ENCODE measurements at regions of chr18 and their contacts with region 1.

Region 1: DNA sequence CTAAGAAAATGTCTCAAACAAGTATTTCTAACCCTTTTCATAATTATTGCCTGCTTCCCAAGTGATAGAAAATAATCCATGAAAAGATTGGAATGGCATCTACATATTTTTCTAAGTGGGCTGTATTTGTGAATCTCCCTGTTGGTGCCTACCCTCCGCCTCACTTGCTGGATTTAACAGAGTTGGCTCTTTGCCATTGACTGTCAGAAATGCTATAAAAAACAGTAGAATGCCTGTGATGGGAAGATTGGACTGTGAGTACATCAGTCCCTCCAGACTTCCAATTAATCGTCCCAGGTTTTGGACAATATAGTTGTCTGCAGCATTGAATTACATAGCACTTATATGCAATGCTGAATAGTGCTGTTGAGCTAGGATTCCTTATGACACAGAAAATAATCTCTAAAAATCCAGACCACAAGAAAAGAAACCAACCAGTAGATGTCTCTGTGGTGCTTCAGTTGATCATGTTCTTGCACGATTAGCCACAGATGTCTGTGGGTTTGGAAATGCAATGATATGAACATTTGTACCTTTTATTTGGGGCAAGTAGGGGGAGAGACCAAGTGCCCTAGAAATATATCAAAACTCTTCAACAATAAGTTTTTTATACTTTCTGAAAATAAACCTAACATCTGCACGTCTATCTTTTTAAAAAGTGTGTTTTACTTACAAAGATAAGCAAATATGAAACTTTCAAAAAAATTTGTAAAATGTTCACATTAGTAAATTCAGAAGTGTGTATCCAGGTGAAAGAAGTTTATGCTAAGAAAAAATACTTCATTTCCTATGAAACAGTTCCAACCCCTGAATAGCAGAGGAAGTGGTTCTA is 88.5 kb downstream of the DYNAP start:
- DNase-seq: peak; percentile 72
- H3K4me3 ChIP-seq: no peak overlapping the region
- CTCF ChIP-seq: peak; percentile 55

Region 2: GRCh38 chr18:54750350-54750749 is 70.8 kb after region 1 on chr18:
- in situ Hi-C with region 1: no loop called
- DNase-seq: no peak
- H3K4me3 ChIP-seq: no peak overlapping the region
- CTCF ChIP-seq: no peak

Region 3: DNA sequence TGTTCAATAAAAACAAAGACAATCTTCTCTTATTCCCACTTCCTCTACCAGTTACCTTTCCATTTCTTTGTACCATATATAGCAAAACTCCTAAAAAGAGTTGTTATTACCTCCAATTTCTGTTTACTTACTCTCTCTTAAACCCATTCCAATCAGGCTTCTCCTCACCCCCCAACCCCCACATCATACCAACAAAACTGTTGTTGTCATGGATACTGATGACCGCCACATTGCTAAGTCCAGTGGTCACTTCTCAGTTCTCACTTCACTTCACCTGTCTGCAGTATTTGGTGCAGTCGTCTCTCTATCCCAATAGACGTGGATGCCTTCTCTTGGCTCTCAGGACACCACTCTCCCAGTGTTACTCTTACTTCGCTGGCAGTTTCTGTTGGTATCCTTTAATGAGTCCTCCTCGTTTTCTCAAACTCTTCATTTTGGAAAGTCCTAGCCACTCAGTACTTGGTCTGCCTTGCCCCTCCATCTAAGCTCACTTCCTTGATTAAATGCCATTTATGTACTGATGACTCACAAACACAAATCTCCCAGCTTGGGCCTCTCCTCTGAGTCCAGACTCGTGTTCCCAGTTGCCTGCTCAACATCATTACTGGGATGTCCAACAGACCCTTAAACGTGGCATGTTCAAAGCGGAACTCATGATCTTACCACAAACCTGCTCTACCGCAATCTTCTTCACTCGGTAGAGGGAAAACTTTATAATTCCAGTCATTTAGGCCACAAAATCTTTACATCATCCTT is 293.3 kb after region 1 on chr18:
- in situ Hi-C with region 1: loop called (anchors 10 kb)
- DNase-seq: no peak
- H3K4me3 ChIP-seq: no peak overlapping the region
- CTCF ChIP-seq: no peak